Activated CD4-positive, alpha-beta T cell treated with anti-CD3 and anti-CD28 coated beads for 36 hours (primary cell): ENCODE measurements at regions of chr12 and their contacts with region 1.

Region 1: GRCh38 chr12:132506328-132507160 is 16.6 kb downstream of the FBRSL1 start:
- DNase-seq: peak; percentile 89
- ATAC-seq: peak; percentile 99
- H3K4me3 Mint-ChIP-seq: peak overlapping the region; percentile 33
- H3K27ac Mint-ChIP-seq: peak overlapping the region; percentile 76
- H3K4me1 Mint-ChIP-seq: peaks cover 48% of the 10 kb centered on the region
- H3K27me3 Mint-ChIP-seq: no peaks in the 10 kb centered on the region

Region 2: GRCh38 chr12:132475304-132476037 is 31.1 kb before region 1 on chr12:
- CTCF ChIA-PET with region 1: interaction called, 4 read pairs
- POLR2A ChIA-PET with region 1: no interaction called
- intact Hi-C with region 1: loop called in 1 of 2 experiments (anchors 1 kb)
- DNase-seq: peak; percentile 62
- ATAC-seq: peak; percentile 50
- H3K4me3 Mint-ChIP-seq: peak overlapping the region; percentile 39
- H3K27ac Mint-ChIP-seq: no peak overlapping the region
- H3K4me1 Mint-ChIP-seq: peaks cover 40% of the 10 kb centered on the region
- H3K27me3 Mint-ChIP-seq: no peaks in the 10 kb centered on the region

Region 3: GRCh38 chr12:132918680-132919079 is 412.1 kb after region 1 on chr12:
- CTCF ChIA-PET with region 1: no interaction called
- POLR2A ChIA-PET with region 1: no interaction called
- intact Hi-C with region 1: no loop called
- DNase-seq: no peak
- ATAC-seq: no peak
- H3K4me3 Mint-ChIP-seq: no peak overlapping the region
- H3K27ac Mint-ChIP-seq: no peak overlapping the region
- H3K4me1 Mint-ChIP-seq: no peaks in the 10 kb centered on the region
- H3K27me3 Mint-ChIP-seq: no peaks in the 10 kb centered on the region